Activated CD4-positive, alpha-beta memory T cell treated with anti-CD3 and anti-CD28 coated beads for 36 hours (primary cell): ENCODE measurements at regions of chr6 and their contacts with region 1.

Region 1: DNA sequence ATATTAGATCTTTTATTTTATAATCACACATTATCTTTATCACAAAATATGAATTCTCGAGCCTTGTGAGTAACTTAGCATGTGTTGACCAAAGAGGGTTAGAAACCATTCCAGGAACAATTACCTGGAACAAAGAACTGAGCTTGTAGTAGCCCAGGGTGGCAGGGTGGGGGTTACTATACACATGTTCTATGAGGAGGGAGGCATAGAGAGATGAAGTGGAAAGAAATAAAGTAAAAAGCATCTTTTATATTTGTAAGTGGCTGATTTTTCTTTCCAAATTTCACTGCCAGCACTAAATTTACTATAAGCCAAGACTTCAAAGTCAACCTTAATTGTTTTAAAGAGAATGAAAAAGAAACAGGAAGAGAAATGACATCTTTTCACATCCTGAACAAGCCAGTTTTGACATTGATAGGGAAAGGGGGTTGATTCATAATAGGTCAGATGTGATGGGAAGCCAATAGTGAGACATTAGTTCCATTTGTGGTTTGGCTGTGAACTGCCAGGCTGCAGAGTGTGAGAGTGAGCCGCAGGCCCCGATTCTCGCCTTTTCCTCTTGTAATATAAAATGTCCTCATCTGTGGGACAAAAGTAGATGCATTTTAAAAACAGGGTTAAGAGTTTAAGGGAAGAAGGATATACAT is 52.7 kb upstream of the MYB start:
- DNase-seq: peak; percentile 82
- H3K4me3 Mint-ChIP-seq: peak overlapping the region; percentile 24
- H3K27ac Mint-ChIP-seq: peak overlapping the region; percentile 81
- H3K4me1 Mint-ChIP-seq: peaks cover 42% of the 10 kb centered on the region
- H3K27me3 Mint-ChIP-seq: no peaks in the 10 kb centered on the region

Region 2: GRCh38 chr6:135162678-135163439 is 34.5 kb after region 1 on chr6:
- CTCF ChIA-PET with region 1: no interaction called
- POLR2A ChIA-PET with region 1: no interaction called
- intact Hi-C with region 1: loop called (anchors 1 kb)
- DNase-seq: peak; percentile 54
- H3K4me3 Mint-ChIP-seq: peak overlapping the region; percentile 49
- H3K27ac Mint-ChIP-seq: peak overlapping the region; percentile 78
- H3K4me1 Mint-ChIP-seq: peaks cover 61% of the 10 kb centered on the region
- H3K27me3 Mint-ChIP-seq: peaks cover 3% of the 10 kb centered on the region